ENCODE measurements at regions of chr1 and their contacts with region 1.

Region 1: GRCh38 chr1:23777979-23778814 is at the start of gene PITHD1:
- DNase-seq: no peak
- ATAC-seq: peak; percentile 95
- H3K4me3 ChIP-seq: peak within 1 kb of the TSS; percentile 82 to 84
- H3K27ac ChIP-seq: peak within 1 kb of the TSS; percentile 91
- H3K4me1 ChIP-seq: peaks cover 12% of the 10 kb centered on the region
- H3K27me3 ChIP-seq: no peaks in the 10 kb centered on the region
- CTCF ChIP-seq: no peak
- total RNA-seq, gene PITHD1: 48.9 TPM

Region 2: GRCh38 chr1:23727362-23727827 is 50.8 kb before region 1 on chr1:
- CTCF ChIA-PET with region 1: no interaction called
- POLR2A ChIA-PET with region 1: no interaction called
- in situ Hi-C with region 1: no loop called
- intact Hi-C with region 1: no loop called
- DNase-seq: no peak
- ATAC-seq: no peak
- H3K4me3 ChIP-seq: no peak overlapping the region
- H3K27ac ChIP-seq: no peak overlapping the region
- H3K4me1 ChIP-seq: peaks cover 5% of the 10 kb centered on the region; the same call in 1 of the 2 replicates
- H3K27me3 ChIP-seq: no peaks in the 10 kb centered on the region
- CTCF ChIP-seq: no peak

Region 3: GRCh38 chr1:23790696-23791515 is 12.7 kb after region 1 on chr1 and contains the start of gene LYPLA2:
- CTCF ChIA-PET with region 1: interaction called, 5 read pairs
- POLR2A ChIA-PET with region 1: interaction called, 12 read pairs
- in situ Hi-C with region 1: no loop called
- intact Hi-C with region 1: no loop called
- DNase-seq: peak; percentile 83
- ATAC-seq: peak; percentile 75
- H3K4me3 ChIP-seq: peak within 1 kb of the TSS; percentile 97 to 99
- H3K27ac ChIP-seq: peak within 1 kb of the TSS; percentile 92
- H3K4me1 ChIP-seq: peaks cover 41% of the 10 kb centered on the region
- H3K27me3 ChIP-seq: no peaks in the 10 kb centered on the region
- CTCF ChIP-seq: no peak
- total RNA-seq, gene LYPLA2: 82.9 TPM

Region 4: GRCh38 chr1:23799570-23800399 is 21.6 kb after region 1 on chr1:
- CTCF ChIA-PET with region 1: interaction called, 6 read pairs
- POLR2A ChIA-PET with region 1: interaction called, 12 read pairs
- in situ Hi-C with region 1: no loop called
- intact Hi-C with region 1: no loop called
- DNase-seq: peak; percentile 87
- ATAC-seq: peak; percentile 56
- H3K4me3 ChIP-seq: peak overlapping the region; percentile 86 to 89
- H3K27ac ChIP-seq: peak overlapping the region; percentile 94
- H3K4me1 ChIP-seq: peaks cover 40% of the 10 kb centered on the region
- H3K27me3 ChIP-seq: no peaks in the 10 kb centered on the region
- CTCF ChIP-seq: no peak

Region 5: DNA sequence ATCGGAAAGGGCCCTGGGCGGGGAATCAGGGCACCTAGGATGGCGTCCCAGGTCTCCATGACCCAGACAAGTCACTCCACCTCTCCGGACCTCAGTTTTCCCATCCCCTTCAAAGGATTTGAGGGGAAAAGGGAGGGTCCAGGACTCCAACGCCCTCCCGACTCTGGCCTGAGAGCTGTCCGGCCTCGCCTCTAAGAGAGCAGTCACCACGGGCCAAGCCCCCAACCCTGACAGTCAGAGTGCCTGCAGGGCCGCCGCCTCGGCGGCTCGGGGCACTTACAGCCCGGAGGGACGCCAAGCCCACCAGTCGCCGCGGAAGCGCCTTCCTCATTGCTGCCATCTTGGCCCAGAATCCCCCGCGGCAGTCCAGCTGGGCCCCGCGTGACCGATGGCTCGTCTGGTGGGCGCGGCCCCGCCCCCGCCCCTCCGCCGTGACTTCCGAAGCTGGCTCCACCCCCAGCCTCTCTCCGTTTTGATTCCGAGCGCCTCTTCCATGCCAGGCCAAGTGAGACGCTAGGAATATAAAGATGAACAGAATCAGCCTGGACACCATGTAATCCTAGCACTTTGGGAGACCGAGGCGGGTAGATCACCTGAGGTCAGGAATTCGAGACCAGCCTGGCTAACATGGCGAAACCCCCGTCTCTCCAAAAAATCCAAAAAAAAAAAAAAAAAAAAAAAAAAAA is 47.0 kb after region 1 on chr1 and contains the start of gene HMGCL:
- CTCF ChIA-PET with region 1: no interaction called
- POLR2A ChIA-PET with region 1: interaction called, 10 read pairs
- in situ Hi-C with region 1: no loop called
- intact Hi-C with region 1: no loop called
- DNase-seq: no peak
- ATAC-seq: peak; percentile 98
- H3K4me3 ChIP-seq: peak within 1 kb of the TSS; percentile 87 to 99
- H3K27ac ChIP-seq: peak within 1 kb of the TSS; percentile 91
- H3K4me1 ChIP-seq: 0 out of 2 replicates have a peak, but pooled peaks cover 5% of the 10 kb centered on the region
- H3K27me3 ChIP-seq: no peaks in the 10 kb centered on the region
- CTCF ChIP-seq: no peak
- total RNA-seq, gene HMGCL: 30.8 TPM

Region 6: DNA sequence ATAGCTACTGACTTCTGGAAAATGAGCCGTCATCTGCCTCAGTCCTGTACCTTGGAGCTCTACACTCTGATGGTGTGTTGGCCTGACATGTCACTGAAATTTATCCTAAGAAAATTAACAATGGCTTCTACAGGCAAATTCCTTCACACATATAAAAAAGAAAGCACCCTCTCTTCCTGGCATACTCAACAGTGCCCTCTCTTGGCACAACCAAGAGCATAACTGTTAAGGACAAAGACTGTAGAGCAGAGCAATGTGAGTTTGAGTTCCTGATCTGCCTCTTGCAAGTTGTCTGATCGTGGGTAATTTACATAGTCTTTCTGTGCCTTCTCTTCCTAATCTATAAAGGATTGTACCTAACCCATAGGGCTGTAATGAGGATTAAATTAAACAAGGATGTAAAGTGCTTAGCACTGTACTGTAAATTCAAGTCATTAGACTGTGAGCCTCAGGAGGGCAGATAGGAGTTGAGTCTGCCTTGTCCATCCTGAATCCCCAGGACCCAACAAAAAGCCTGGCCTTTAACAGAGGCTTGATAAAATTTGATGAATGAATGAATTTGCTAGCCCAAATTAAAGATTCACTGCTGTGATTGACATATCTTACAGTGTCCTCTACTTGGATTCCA is 1370.6 kb after region 1 on chr1:
- CTCF ChIA-PET with region 1: no interaction called
- POLR2A ChIA-PET with region 1: no interaction called
- in situ Hi-C with region 1: no loop called
- intact Hi-C with region 1: no loop called
- DNase-seq: peak; percentile 7
- ATAC-seq: no peak
- H3K4me3 ChIP-seq: no peak overlapping the region
- H3K27ac ChIP-seq: no peak overlapping the region
- H3K4me1 ChIP-seq: no peaks in the 10 kb centered on the region
- H3K27me3 ChIP-seq: peaks cover 10% of the 10 kb centered on the region
- CTCF ChIP-seq: peak; percentile 16